CD8-positive, alpha-beta memory T cell (primary cell): ENCODE measurements at regions of chr11 and their contacts with region 1.

Region 1: DNA sequence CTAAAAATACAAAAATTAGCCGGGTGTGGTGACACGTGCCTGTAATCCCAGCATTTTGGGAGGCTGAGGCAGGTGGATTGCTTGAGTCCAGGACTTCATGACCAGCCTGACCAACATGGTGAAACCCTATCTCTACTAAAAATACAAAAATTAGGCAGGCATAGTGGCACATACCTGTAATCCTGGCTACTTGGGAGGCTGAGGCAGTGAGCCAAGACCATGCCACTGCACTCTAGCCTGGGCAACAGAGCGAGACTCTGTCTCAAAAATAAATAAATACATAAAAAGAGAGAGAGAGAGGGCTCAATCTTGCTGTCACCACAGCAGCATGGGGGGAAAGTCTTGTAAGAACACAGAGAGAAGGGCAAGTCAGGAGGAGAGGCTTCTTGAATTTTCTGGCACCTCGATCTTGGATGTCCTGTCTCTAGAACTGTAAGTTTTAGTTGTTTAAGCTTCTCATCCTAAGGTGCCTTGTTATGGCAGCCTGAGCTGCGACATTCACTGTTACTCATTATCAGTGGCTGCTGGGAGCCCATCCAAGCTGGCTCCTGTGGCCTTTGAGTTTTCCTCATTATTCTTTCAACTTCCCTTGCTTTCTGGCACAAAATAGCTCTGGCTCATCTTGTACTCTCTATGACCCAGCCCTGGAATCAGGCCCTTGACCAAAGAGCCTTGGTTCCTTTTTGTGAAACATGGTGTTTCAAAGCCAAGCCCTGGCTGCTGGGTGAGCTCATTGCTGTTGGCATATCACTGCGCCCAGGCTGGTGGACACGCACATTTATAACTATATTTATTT is 8.0 kb upstream of the PSMC3 start:
- DNase-seq: no peak
- H3K4me3 ChIP-seq: no peak overlapping the region
- H3K4me3 Mint-ChIP-seq: no peak overlapping the region
- H3K27ac ChIP-seq: no peak overlapping the region
- H3K27ac Mint-ChIP-seq: no peak overlapping the region
- H3K4me1 ChIP-seq: no peaks in the 10 kb centered on the region
- H3K4me1 Mint-ChIP-seq: no peaks in the 10 kb centered on the region
- H3K27me3 ChIP-seq: no peaks in the 10 kb centered on the region
- H3K27me3 Mint-ChIP-seq: peaks cover 0 to 3% of the 10 kb centered on the region in 2 donors

Region 2: DNA sequence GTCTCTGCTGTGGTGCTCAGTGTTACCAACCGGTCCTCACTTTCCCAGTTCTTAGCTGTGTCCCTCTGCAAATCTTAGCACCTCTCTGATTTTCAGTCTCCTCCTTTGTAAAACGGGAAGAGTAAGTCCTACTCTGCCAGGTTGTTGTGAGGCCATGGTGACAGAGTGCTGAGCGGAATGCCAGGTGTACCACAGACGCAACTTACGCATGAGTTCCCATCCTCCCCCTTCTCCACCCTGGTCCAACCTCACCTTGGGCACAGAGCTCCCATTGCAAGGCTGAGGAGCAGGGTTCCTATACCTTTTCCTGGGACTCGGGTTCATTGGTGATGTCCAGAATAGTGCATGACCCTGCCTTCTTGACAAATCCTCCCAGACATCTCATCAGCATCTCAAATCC is 226.7 kb before region 1 on chr11:
- CTCF ChIA-PET with region 1: no interaction called
- POLR2A ChIA-PET with region 1: interaction called, 13 read pairs
- DNase-seq: no peak
- H3K4me3 ChIP-seq: no peak overlapping the region
- H3K4me3 Mint-ChIP-seq: no peak overlapping the region
- H3K27ac ChIP-seq: no peak overlapping the region
- H3K27ac Mint-ChIP-seq: peak overlapping the region in 1 of 8 donors; percentile 58
- H3K4me1 ChIP-seq: no peaks in the 10 kb centered on the region
- H3K4me1 Mint-ChIP-seq: no peaks in the 10 kb centered on the region
- H3K27me3 ChIP-seq: no peaks in the 10 kb centered on the region
- H3K27me3 Mint-ChIP-seq: no peaks in the 10 kb centered on the region